Activated naive CD4-positive, alpha-beta T cell treated with anti-CD3 and anti-CD28 coated beads for 36 hours (primary cell): ENCODE measurements at regions of chr3 and their contacts with region 1.

Region 1: DNA sequence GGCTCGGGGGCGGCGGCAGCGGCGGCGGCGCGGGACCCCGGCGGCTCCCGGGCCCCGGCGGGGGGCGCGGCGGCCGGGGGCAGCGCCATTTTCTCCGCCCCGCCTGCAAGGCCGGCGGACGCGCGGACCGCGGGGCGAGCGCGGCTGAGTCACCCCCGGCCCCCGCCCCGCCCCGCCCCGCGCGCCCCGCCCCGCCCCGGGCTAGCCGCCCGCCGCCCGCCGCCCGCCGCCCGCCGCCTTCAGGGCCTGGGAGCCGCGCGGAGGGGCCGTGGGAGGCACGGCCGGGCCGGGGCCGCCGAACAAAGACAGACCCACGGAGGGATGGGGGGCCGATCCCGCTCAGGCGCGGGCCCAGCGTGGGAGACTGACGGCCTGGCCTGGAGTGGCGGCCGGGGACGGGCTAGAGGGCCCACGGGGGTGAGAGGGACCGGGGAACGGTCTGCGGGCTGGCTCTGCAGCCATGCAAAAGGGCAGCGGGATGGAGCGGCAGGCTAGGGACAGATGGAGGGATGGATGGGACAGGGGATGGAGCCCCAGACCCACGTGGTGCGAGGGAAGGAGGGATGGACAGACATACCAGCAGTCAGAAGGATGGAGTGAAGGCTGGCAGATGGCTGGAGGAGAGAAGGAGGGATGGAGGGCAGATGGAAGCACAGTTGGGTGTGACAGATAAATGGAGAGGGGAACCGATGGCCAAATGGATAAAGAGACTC is at the start of gene EIF4E3:
- DNase-seq: peak; percentile 31
- H3K4me3 Mint-ChIP-seq: peak within 1 kb of the TSS; percentile 90
- H3K27ac Mint-ChIP-seq: peak within 1 kb of the TSS; percentile 91
- H3K4me1 Mint-ChIP-seq: peaks cover 59% of the 10 kb centered on the region
- H3K27me3 Mint-ChIP-seq: no peaks in the 10 kb centered on the region
- total RNA-seq, gene EIF4E3: 25.2 to 26.2 TPM

Region 2: DNA sequence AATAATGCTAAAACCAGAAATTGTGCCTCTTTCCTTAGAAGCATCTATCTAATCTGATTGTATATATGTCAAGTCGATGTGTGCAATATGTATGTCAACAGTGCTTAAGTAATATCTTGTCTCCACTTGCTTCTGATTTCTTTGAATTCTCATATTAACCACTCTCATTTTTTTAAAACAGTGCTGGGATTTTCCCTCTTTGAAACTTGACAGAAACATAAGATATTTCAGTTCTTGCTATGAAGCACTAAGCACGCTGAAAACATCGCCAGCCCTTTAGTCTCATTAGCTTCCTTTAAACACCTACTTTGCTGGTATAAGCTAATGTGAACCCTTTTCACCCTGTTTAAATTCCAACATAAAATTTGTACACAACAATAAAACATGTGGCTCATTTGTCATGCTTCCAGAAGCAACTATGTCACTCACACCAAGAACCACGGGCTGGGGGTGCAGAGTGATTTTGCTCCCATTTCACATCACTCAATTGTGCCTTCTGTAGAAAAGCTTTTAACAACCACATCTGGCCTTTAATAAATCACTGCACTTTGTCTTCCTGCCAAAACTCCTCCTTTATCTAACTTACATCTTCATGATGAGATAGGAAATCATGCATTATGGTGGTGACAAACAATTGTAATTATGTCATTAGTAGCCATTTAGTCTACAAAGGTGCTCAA is 327.1 kb before region 1 on chr3:
- CTCF ChIA-PET with region 1: no interaction called
- intact Hi-C with region 1: no loop called
- DNase-seq: peak; percentile 67
- H3K4me3 Mint-ChIP-seq: peak overlapping the region; percentile 56
- H3K27ac Mint-ChIP-seq: peak overlapping the region; percentile 67
- H3K4me1 Mint-ChIP-seq: peaks cover 87% of the 10 kb centered on the region
- H3K27me3 Mint-ChIP-seq: no peaks in the 10 kb centered on the region

Region 3: DNA sequence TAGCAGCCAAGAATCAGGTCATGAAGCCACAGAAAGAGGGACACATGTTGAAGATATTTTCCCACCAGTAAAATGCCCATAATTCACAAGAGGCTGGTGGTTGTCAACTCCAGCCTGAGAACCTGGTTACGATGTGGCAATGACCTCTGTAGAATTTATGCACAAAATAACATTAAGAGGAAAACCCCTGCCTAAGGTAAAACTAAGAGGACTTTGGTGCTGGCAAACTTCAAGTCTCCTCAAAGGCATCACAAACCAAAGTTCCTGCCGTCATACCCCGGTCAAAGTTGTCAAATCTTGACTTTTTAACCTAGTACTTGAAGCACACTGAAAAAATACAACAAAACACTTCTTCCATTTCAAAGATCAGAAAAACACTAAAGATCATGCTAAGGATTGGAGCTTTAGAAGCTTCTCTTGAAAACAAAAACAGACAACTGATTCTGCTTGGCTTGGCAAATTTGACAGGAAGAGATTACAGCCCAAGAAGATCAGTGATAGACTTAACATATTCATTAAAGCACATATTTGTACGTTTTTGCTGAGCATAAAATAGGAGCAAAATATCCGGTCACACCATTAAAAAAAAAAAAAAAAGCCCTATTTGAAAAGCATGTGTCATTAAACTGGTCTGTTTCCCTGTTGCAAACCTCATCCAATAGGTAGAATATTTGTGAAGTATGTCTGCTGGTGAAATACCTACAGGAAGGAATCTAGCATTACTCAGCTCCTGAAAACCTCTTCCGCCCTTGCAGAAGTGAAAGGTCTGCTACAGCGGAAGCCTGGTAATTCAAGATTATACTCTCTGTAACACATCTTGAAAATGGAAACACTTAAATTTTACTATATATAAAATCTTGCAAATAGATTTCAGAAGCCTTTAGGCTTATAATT is 23.1 kb before region 1 on chr3:
- CTCF ChIA-PET with region 1: interaction called, 3 read pairs
- intact Hi-C with region 1: loop called (anchors 1 kb)
- DNase-seq: peak; percentile 65
- H3K4me3 Mint-ChIP-seq: peak overlapping the region; percentile 63
- H3K27ac Mint-ChIP-seq: peak overlapping the region; percentile 91
- H3K4me1 Mint-ChIP-seq: peaks cover 57% of the 10 kb centered on the region
- H3K27me3 Mint-ChIP-seq: no peaks in the 10 kb centered on the region

Region 4: GRCh38 chr3:71753630-71754483 is 28.4 kb after region 1 on chr3 and contains the start of gene GPR27:
- CTCF ChIA-PET with region 1: interaction called, 5 read pairs
- intact Hi-C with region 1: loop called (anchors 1 kb)
- DNase-seq: peak; percentile 22
- H3K4me3 Mint-ChIP-seq: peak within 1 kb of the TSS; percentile 64
- H3K27ac Mint-ChIP-seq: no peak within 1 kb of the TSS
- H3K4me1 Mint-ChIP-seq: peaks cover 7% of the 10 kb centered on the region
- H3K27me3 Mint-ChIP-seq: peaks cover 33% of the 10 kb centered on the region
- total RNA-seq, gene GPR27: 0.74 to 0.93 TPM

Region 5: GRCh38 chr3:71875461-71875947 is 150.1 kb after region 1 on chr3:
- CTCF ChIA-PET with region 1: interaction called, 14 read pairs
- intact Hi-C with region 1: loop called (anchors 1 kb)
- DNase-seq: peak; percentile 92
- H3K4me3 Mint-ChIP-seq: no peak overlapping the region
- H3K27ac Mint-ChIP-seq: peak overlapping the region; percentile 76
- H3K4me1 Mint-ChIP-seq: peaks cover 35% of the 10 kb centered on the region
- H3K27me3 Mint-ChIP-seq: no peaks in the 10 kb centered on the region

Region 6: GRCh38 chr3:72259755-72260587 is 534.5 kb after region 1 on chr3:
- CTCF ChIA-PET with region 1: no interaction called
- intact Hi-C with region 1: loop called (anchors 2 kb)
- DNase-seq: peak; percentile 46
- H3K4me3 Mint-ChIP-seq: no peak overlapping the region
- H3K27ac Mint-ChIP-seq: peak overlapping the region; percentile 82
- H3K4me1 Mint-ChIP-seq: peaks cover 58% of the 10 kb centered on the region
- H3K27me3 Mint-ChIP-seq: no peaks in the 10 kb centered on the region

Region 7: DNA sequence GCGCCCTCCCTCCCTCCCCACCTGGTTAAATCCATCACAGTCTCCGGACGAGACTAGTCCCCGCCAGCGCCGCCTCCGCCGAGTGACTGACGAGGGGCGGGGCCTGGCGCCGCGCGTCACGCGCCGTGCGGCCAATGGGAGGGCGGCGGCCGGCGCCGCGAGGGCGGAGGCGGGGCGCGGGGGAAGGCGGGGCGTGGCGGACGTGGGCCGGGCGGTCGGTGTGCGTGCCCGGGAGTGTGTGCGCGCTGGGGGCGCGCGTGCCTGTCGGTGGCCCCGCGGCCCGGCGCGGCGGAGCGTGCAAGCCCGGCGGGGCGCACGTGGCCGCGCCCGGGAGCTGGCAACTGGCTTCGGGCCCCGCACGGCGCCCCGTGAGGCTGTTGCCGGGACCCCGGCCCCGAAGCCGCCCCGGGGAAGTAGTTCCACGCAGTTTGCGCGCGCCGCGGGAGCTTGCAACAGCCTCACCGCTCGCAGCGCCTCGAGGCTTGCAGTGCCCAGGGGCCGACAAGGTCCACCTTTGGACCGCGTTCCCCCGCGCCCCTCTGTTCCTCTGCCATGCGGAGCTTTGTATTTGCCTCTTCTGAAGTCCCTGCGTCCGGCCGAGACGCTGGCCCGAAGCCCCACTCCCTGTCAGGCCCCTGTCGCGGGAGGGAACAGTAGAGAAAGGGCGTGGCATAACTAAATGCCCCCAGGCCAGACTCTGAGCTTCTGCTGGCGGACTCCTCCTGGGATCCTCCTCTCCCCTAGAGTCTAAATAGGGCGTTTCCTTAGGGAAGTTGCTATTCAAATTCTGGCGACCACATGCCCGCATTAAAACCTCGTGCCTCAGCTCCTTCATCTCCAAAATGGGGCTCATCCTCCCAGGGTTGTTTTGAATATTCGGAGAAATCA is 721.9 kb after region 1 on chr3:
- CTCF ChIA-PET with region 1: no interaction called
- intact Hi-C with region 1: loop called (anchors 10 kb)
- DNase-seq: peak; percentile 88
- H3K4me3 Mint-ChIP-seq: peak overlapping the region; percentile 54
- H3K27ac Mint-ChIP-seq: no peak overlapping the region
- H3K4me1 Mint-ChIP-seq: peaks cover 37% of the 10 kb centered on the region
- H3K27me3 Mint-ChIP-seq: peaks cover 12% of the 10 kb centered on the region

Region 8: DNA sequence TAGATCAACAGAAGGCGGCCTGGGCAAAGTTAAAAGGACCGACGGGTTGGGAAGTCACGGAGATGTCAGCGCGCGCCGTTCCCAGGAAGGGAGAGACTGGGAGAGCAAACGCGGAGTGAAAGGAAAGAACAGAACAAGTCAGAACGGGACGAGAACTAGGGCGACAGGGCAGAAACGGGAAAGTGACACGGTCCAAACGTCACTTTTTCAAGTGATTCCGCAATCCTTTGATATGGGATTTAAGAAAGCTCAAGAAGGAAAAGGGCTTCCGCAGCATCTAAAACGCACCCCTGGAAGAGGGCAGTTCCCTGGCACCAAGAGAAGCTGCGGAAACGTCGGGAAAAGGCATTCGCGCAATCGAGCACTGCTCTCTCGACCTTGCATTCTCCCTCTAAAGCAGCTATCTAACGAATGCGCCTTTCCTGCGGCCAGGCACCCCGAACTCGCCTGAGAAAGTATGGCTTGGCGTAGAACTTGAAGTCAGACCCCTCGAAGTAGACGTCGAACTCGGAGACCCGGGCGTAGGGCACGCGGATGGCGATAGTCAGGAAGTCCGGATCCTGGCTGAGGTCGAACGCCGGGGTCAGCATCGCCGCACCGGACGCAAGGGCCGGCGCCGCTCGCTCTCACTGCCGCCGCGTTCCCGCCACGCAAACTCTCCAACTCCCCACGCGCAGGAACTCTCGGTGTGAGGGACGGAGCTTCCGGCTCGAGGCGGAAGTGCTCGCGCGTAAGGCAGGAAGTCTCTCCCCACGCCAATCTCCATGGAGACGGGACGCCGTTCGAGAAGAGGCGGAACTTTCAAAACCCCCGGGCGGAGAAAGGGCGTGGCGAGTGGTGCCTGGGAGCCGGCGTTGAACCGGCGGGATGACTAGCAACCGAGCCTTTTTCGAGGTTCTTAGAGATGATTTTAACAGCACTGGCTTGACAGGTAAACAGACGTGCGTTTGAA is 1122.6 kb after region 1 on chr3 and contains the start of gene SHQ1:
- CTCF ChIA-PET with region 1: no interaction called
- intact Hi-C with region 1: loop called (anchors 2 kb)
- DNase-seq: peak; percentile 98
- H3K4me3 Mint-ChIP-seq: peak within 1 kb of the TSS; percentile 97
- H3K27ac Mint-ChIP-seq: peak within 1 kb of the TSS; percentile 57
- H3K4me1 Mint-ChIP-seq: peaks cover 47% of the 10 kb centered on the region
- H3K27me3 Mint-ChIP-seq: no peaks in the 10 kb centered on the region
- total RNA-seq, gene SHQ1: 19.9 to 20.5 TPM